Left cardiac atrium (tissue), 4 donors: ENCODE measurements at regions of chr2 and their contacts with region 1.

Region 1: DNA sequence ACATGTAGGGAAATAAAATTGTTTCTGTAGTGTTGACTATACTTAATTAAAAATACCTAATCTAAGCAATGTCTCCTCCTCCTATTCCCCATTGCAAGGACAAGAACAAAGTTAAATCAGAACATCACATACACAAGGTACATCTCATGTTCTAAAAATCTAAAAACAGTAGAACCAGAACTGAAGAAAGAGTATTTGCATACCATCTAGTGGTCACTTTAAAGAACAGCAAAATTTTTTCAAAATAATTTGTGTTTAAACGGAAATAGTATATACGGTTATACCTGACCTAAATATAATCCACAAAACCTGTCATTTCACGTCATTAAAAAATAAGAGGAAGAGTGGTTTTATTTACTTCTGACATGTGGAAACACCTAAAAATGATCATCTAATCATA is 294.3 kb upstream of the KCNH7 start:
- DNase-seq: no peak
- ATAC-seq: peak in 1 of 2 donors; percentile 18

Region 2: DNA sequence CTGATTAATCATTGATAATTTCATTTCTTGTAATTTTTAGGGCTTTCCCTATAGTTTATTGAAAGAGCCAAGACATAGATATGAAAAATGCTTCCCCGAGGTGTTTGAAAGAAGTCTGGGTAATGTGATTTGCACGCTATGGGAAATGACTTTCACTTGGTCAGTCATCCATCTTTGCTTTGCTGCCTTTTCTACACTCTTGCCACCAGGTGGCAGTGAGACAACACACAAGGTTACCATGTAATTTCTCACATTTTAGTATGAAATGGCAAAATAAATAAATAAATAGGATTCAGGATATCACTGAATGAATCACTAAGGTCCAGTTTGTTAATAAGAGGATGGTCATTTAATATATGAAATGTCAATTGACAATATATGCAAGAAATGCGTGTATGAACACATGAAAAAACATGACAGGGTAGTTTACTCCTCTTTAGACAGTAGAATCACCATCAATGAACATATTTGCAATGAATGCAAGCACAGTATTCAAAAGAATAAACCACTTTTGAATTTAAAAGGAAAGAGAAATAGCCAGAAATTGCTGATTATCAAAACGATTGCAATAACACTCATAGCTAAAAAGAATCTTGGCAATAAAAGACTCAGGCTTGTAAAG is 242.0 kb before region 1 on chr2:
- intact Hi-C with region 1: loop called in 1 of 2 experiments (anchors 2 kb)
- DNase-seq: no peak
- ATAC-seq: peak in 1 of 2 donors; percentile 47